ENCODE measurements at regions of chr10 and their contacts with region 1.

Region 1: DNA sequence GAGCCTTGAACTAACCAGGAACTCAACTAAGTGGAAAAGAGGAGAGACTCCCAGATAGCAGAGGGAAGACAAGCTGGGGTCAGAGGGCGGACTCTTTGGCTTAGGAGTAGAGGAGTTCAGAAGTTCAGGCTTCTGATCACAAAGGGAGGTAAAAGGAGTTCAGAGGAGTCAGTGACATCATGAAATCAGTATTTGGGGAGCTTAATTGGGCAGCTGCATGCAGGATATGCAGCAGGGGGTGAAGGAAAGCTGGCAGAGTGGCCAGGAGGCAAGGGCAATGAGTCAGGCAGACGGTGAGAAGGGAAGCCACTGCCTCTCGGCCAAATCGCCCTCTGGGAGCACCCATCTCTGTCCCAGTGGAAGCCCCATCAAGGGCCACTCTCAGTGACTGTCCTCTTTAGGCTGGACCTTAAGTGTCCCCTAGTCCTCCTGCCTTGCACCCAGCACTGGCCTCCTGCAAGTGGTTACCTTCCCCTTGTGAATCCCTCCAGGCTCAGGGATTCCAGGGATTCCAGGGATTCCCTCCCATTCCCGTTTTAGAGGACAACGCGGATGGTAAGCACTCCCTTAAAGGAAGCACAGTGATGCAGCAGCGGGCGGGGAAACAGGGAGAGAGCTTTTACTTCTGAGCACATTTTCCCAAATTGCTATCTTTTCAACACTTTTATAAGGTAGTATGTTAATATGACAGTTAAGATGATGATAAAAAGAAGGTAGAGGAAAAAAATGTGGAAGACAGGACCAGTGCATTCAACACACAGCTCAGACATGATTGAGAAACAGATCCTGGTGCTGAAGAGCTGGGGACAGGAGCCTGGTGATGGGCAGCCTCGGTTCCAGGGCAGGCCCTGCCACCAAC is 72.6 kb downstream of the KCNMA1 start:
- DNase-seq: no peak
- H3K4me3 ChIP-seq: no peak overlapping the region
- CTCF ChIP-seq: no peak

Region 2: GRCh38 chr10:77513781-77514331 is 51.1 kb before region 1 on chr10:
- in situ Hi-C with region 1: loop called (anchors 5 kb)
- DNase-seq: peak; percentile 65
- H3K4me3 ChIP-seq: no peak overlapping the region
- CTCF ChIP-seq: no peak

Region 3: GRCh38 chr10:77603534-77603927 is 38.6 kb after region 1 on chr10:
- in situ Hi-C with region 1: no loop called
- DNase-seq: no peak
- H3K4me3 ChIP-seq: no peak overlapping the region
- CTCF ChIP-seq: no peak

Region 4: GRCh38 chr10:78362406-78363022 is 797.6 kb after region 1 on chr10:
- in situ Hi-C with region 1: no loop called
- DNase-seq: no peak
- H3K4me3 ChIP-seq: no peak overlapping the region
- CTCF ChIP-seq: no peak